ENCODE measurements at regions of chr2 and their contacts with region 1.

Region 1: GRCh38 chr2:30225131-30225762 is 6.1 kb upstream of the LBH start:
- DNase-seq: peak; percentile 58
- ATAC-seq: peak; percentile 64
- H3K4me3 Mint-ChIP-seq: peak overlapping the region; percentile 77
- H3K27ac Mint-ChIP-seq: peak overlapping the region; percentile 93
- H3K4me1 Mint-ChIP-seq: peaks cover 74% of the 10 kb centered on the region
- H3K27me3 Mint-ChIP-seq: peaks cover 9% of the 10 kb centered on the region

Region 2: GRCh38 chr2:29723255-29724001 is 501.8 kb before region 1 on chr2:
- CTCF ChIA-PET with region 1: no interaction called
- POLR2A ChIA-PET with region 1: no interaction called
- intact Hi-C with region 1: no loop called
- DNase-seq: no peak
- ATAC-seq: peak; percentile 36
- H3K4me3 Mint-ChIP-seq: no peak overlapping the region
- H3K27ac Mint-ChIP-seq: no peak overlapping the region
- H3K4me1 Mint-ChIP-seq: no peaks in the 10 kb centered on the region
- H3K27me3 Mint-ChIP-seq: peaks cover 11% of the 10 kb centered on the region

Region 3: GRCh38 chr2:30305235-30305634 is 80.0 kb after region 1 on chr2:
- CTCF ChIA-PET with region 1: no interaction called
- POLR2A ChIA-PET with region 1: interaction called, 13 read pairs
- intact Hi-C with region 1: no loop called
- DNase-seq: no peak
- ATAC-seq: peak; percentile 73
- H3K4me3 Mint-ChIP-seq: no peak overlapping the region
- H3K27ac Mint-ChIP-seq: no peak overlapping the region
- H3K4me1 Mint-ChIP-seq: peaks cover 30% of the 10 kb centered on the region
- H3K27me3 Mint-ChIP-seq: no peaks in the 10 kb centered on the region

Region 4: GRCh38 chr2:30315391-30316063 is 90.3 kb after region 1 on chr2:
- CTCF ChIA-PET with region 1: no interaction called
- POLR2A ChIA-PET with region 1: no interaction called
- intact Hi-C with region 1: loop called in 1 of 2 experiments (anchors 5 kb)
- DNase-seq: no peak
- ATAC-seq: peak; percentile 76
- H3K4me3 Mint-ChIP-seq: no peak overlapping the region
- H3K27ac Mint-ChIP-seq: peak overlapping the region; percentile 74
- H3K4me1 Mint-ChIP-seq: peaks cover 36% of the 10 kb centered on the region
- H3K27me3 Mint-ChIP-seq: no peaks in the 10 kb centered on the region

Region 5: GRCh38 chr2:31318361-31319336 is 1093.4 kb after region 1 on chr2:
- CTCF ChIA-PET with region 1: no interaction called
- POLR2A ChIA-PET with region 1: no interaction called
- intact Hi-C with region 1: loop called in 1 of 2 experiments (anchors 10 kb)
- DNase-seq: peak; percentile 69
- ATAC-seq: peak; percentile 61
- H3K4me3 Mint-ChIP-seq: no peak overlapping the region
- H3K27ac Mint-ChIP-seq: peak overlapping the region; percentile 22
- H3K4me1 Mint-ChIP-seq: peaks cover 51% of the 10 kb centered on the region
- H3K27me3 Mint-ChIP-seq: no peaks in the 10 kb centered on the region

Measured in activated CD4-positive, alpha-beta T cell treated with anti-CD3 and anti-CD28 coated beads for 36 hours (primary cell).